Dorsolateral prefrontal cortex (tissue), 120 donors: ENCODE measurements at regions of chr21 and their contacts with region 1.

Region 1: GRCh38 chr21:28745131-28746016 is 247.3 kb downstream of the LTN1 start:
- DNase-seq: peak; percentile 51 to 84 (median 72)
- H3K4me3 ChIP-seq: peak overlapping the region; percentile 33 to 73 (median 58)
- H3K27ac ChIP-seq: peak overlapping the region in 50 of 59 donors; percentile 5 to 87 (median 56)
- H3K27me3 ChIP-seq: no peaks in the 10 kb centered on the region
- CTCF ChIP-seq: peak; percentile 74 to 99 (median 92)

Region 2: DNA sequence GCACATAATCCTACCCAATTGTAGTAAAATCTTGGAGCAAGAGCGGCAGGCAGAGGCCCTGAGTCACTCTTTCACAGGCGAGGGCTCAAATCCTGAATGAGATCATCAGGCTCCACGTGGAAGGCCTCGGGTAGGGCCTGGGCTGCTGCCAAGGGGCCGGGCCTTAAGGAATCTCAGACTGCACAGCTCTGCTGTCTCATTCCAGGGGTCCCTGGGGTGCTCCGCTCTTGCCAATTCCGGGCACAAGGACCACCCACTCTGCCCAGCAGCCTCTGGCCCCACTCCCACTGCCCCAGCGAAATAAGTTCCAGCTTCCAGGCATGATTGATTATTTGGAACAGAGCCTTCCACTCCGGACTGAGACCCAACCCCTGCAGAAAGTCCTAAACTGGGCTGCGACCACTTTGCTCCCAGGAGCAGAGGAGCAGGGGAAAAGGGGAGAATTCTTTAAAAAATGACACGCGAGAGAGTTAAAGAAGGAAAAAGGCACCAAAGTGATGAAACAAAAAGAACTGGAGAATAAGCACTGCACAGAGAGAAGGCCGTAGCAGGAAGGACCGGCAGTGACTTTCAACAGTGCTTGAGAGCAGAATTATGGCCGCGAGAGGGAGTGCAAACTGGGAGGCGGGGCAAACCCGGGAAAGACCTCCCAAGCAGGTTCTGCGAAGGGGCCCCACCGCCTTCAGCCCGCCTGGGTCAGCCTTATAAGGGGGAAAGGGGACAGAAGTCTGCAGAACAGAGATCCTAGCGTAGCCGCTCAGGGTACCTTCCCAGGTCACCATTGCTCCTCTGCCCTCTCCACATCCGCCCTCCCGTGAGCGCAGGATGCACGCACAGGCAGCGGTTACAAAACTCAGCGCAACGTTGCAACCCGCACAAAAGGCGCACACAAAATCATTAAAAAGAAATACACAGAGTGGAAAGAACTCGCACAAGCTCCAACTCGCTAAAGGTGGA is 1902.1 kb before region 1 on chr21:
- intact Hi-C with region 1: loop called in 1 of 2 experiments (anchors 5 kb)
- DNase-seq: peak; percentile 76 to 95 (median 89)
- H3K4me3 ChIP-seq: peak overlapping the region; percentile 63 to 94 (median 84)
- H3K27ac ChIP-seq: peak overlapping the region in 58 of 59 donors; percentile 45 to 100 (median 99)
- H3K27me3 ChIP-seq: no peaks in the 10 kb centered on the region
- CTCF ChIP-seq: peak in 42 of 56 donors; percentile 6 to 57 (median 35)

Region 3: GRCh38 chr21:27700974-27701614 is 1044.3 kb before region 1 on chr21:
- intact Hi-C with region 1: loop called (anchors 5 to 10 kb)
- DNase-seq: peak; percentile 71 to 90 (median 85)
- H3K4me3 ChIP-seq: peak overlapping the region in 43 of 59 donors; percentile 8 to 57 (median 31)
- H3K27ac ChIP-seq: peak overlapping the region in 9 of 59 donors; percentile 9 to 71 (median 39)
- H3K27me3 ChIP-seq: peaks cover 0 to 5% (median 0%) of the 10 kb centered on the region in 45 donors
- CTCF ChIP-seq: peak; percentile 73 to 100 (median 97)

Region 4: DNA sequence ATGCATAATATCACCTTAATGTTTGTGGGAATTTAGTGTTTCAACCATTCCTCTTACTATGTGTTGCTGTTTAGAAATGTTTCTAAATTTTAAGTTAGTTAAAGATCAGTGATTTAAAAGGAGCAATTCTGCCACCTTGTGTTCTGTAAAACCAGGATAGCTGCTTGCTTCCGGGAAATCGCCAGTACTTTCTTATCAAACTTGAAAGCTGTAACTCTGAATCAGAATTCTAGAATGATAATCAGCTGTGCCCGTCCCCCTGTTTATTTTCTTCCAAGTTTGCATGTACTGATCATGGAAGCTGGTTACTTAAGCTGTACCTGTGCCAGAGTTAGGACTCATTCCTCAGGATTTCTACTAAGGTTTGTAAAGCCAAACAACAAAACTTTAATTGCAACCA is 409.1 kb before region 1 on chr21:
- intact Hi-C with region 1: loop called (anchors 2 to 10 kb)
- DNase-seq: peak in 1 of 10 donors; percentile 14
- H3K4me3 ChIP-seq: peak overlapping the region in 1 of 59 donors; percentile 38
- H3K27ac ChIP-seq: peak overlapping the region in 52 of 59 donors; percentile 9 to 99 (median 94)
- H3K27me3 ChIP-seq: no peaks in the 10 kb centered on the region
- CTCF ChIP-seq: peak; percentile 30 to 89 (median 68)

Region 5: DNA sequence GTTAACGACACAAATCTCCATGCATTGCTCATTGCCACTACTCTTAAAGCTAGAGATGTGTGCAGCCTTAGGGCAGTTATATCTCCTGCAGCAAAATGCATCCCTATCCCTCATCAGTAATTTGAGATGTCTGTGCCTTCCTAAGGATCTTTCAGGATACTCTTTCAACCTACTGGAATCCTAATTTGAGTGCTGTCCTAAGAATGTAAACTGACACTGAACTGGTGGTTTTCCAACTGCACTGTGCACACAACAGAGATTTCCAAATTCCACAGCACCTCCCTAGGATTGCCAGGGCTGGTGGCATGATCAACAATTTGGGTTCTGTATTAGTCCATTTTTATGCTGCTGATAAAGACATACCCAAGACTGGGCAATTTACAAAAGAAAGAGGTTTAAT is 53.4 kb after region 1 on chr21:
- intact Hi-C with region 1: loop called in 1 of 2 experiments (anchors 5 kb)
- DNase-seq: no peak
- H3K4me3 ChIP-seq: no peak overlapping the region
- H3K27ac ChIP-seq: no peak overlapping the region
- H3K27me3 ChIP-seq: no peaks in the 10 kb centered on the region
- CTCF ChIP-seq: no peak